ENCODE measurements at regions of chr17 and their contacts with region 1.

Region 1: DNA sequence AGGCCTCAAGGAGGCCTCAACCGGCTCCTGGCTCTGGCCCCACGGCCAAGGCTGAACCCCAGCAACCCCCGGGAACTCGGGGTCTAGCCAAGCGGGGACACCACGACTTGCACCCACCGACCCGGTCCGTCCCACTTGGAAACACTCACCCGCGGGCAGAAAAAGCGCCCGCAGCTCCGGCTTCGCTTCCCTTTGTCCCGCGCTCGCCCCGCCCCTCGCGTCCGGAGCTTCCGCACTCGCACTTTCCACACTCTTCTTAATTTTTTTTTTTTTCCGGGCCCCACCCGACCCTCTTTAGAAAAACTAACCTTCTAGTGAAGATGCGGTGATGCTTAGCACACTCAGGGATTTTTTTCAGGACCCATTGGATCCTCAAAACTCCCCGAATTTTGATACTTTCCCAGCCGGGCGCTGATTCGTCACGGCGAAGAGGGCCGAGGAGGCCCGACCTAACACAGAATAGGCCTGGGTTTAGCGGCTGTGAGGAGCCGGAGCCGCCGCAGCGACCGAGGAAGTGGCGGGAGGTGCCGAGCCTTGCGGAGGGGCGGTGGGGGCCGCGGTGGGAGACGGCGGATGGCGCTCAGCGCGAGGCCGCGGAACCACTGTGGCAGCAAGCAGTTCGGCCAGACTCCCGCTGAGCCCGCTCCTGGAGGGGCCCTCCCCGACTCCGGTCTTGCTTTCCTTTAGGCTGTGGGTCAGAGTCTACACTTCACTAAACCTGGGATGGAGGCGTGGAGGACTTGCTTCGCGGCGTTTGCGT is at the start of gene SMARCE1:
- DNase-seq: peak; percentile 98
- H3K4me3 Mint-ChIP-seq: peak within 1 kb of the TSS; percentile 74
- H3K27ac Mint-ChIP-seq: peak within 1 kb of the TSS; percentile 87
- H3K4me1 Mint-ChIP-seq: peaks cover 29% of the 10 kb centered on the region
- H3K27me3 Mint-ChIP-seq: no peaks in the 10 kb centered on the region
- CTCF ChIP-seq: no peak
- total RNA-seq, gene SMARCE1: 755 and 768 TPM in 2 replicates

Region 2: GRCh38 chr17:40632216-40632615 is 15.6 kb before region 1 on chr17:
- CTCF ChIA-PET with region 1: interaction called, 217 read pairs
- intact Hi-C with region 1: no loop called
- DNase-seq: peak; percentile 4
- H3K4me3 Mint-ChIP-seq: no peak overlapping the region
- H3K27ac Mint-ChIP-seq: no peak overlapping the region
- H3K4me1 Mint-ChIP-seq: no peaks in the 10 kb centered on the region
- H3K27me3 Mint-ChIP-seq: no peaks in the 10 kb centered on the region
- CTCF ChIP-seq: no peak

Region 3: DNA sequence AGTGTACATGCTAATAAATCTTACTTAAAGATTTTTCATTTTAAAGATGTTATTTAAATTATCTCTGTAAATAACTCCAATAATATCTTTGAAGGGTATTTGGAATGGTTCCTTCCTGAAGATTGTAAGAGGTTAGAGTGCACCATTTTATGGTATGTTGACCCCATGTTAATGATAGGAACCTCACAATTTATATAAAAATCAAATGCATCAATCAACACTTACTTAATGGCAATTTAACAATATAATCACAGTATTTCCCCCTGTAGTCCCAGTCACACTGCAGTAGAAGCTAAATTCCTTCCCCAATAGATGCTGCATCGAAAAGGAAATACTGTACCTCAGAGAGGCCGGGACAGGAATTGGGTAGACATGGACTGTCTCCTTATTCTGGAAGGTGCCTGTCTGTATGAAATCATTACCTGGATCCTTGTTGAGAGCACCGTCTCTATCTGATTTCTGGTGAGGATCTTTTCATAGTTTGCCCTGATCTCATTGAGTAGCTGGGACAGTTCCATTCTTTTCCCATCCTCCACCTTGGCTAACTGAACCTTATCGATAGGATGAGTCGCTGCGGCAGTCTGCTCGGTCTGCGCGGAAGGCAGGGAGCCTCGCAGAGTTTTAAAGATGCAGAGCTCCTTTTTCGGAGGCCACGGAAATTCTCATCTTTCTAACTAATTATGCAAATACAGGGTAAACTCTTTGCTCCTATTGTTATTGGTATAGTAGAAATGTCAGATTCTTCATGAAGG is 17.0 kb after region 1 on chr17 and contains the start of gene KRT222:
- CTCF ChIA-PET with region 1: interaction called, 43 read pairs
- intact Hi-C with region 1: loop called (anchors 1 kb)
- DNase-seq: no peak
- H3K4me3 Mint-ChIP-seq: peak within 1 kb of the TSS; percentile 46
- H3K27ac Mint-ChIP-seq: no peak within 1 kb of the TSS
- H3K4me1 Mint-ChIP-seq: peaks cover 19% of the 10 kb centered on the region
- H3K27me3 Mint-ChIP-seq: peaks cover 86% of the 10 kb centered on the region
- CTCF ChIP-seq: no peak
- total RNA-seq, gene KRT222: not detected in 2 replicates

Region 4: DNA sequence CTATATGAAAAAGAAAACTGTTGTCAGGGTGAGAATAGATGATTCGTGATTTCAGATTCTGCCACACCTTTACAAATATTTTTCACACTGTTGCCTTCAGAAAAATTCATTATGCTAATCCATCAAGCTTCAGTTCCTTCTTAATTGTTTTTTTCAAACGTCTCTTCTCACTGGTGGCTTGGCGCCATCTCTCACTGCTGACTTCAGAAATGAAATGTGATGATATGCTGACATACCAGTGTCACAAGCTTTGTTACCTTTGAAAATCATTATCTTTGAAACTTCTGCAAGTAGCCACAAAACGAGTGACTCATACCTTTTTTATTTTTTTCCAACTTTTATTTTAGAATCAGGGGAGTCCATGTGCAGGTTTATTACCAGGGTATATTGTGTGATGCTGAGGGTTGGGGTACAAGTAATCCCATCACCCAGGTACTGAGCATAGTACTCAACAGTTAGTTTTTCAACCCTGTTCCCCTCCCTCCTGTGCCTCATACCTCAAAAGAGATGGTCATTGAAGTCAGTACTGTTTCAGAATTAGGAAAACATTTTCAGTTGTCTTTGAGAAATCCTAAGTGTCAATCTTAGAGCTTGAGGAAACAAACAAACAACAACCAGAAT is 31.2 kb after region 1 on chr17:
- CTCF ChIA-PET with region 1: interaction called, 17 read pairs
- intact Hi-C with region 1: no loop called
- DNase-seq: no peak
- H3K4me3 Mint-ChIP-seq: no peak overlapping the region
- H3K27ac Mint-ChIP-seq: no peak overlapping the region
- H3K4me1 Mint-ChIP-seq: peaks cover 6% of the 10 kb centered on the region
- H3K27me3 Mint-ChIP-seq: peaks cover 85% of the 10 kb centered on the region
- CTCF ChIP-seq: no peak

Region 5: DNA sequence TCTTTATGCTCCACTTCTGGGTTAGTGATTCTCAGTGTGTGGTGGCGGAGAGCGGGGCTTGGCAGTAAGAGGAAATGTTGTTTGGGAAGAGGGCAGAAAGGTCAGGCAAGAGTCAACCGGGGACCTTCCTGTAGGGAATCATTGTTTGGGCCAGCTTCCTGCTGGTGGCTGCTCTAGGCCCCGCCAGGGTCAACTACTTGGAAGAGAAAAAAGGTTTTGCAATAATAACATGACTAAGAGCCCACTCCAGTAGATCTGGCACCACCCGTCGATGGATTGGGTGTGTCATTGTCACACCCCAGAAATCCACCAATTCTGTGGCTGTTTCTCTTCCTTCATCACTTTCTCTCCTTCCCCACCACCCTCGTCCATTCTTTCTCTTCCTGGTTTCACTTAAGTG is 59.9 kb after region 1 on chr17:
- CTCF ChIA-PET with region 1: interaction called, 16 read pairs
- intact Hi-C with region 1: no loop called
- DNase-seq: peak; percentile 92
- H3K4me3 Mint-ChIP-seq: no peak overlapping the region
- H3K27ac Mint-ChIP-seq: peak overlapping the region; percentile 14
- H3K4me1 Mint-ChIP-seq: peaks cover 36% of the 10 kb centered on the region
- H3K27me3 Mint-ChIP-seq: peaks cover 14% of the 10 kb centered on the region
- CTCF ChIP-seq: no peak

Region 6: GRCh38 chr17:40726919-40727318 is 79.1 kb after region 1 on chr17:
- CTCF ChIA-PET with region 1: interaction called, 12 read pairs
- intact Hi-C with region 1: loop called (anchors 1 kb)
- DNase-seq: peak; percentile 45
- H3K4me3 Mint-ChIP-seq: no peak overlapping the region
- H3K27ac Mint-ChIP-seq: no peak overlapping the region
- H3K4me1 Mint-ChIP-seq: peaks cover 19% of the 10 kb centered on the region
- H3K27me3 Mint-ChIP-seq: peaks cover 54% of the 10 kb centered on the region
- CTCF ChIP-seq: no peak

Region 7: GRCh38 chr17:40775945-40776344 is 128.1 kb after region 1 on chr17:
- CTCF ChIA-PET with region 1: interaction called, 11 read pairs
- intact Hi-C with region 1: no loop called
- DNase-seq: no peak
- H3K4me3 Mint-ChIP-seq: no peak overlapping the region
- H3K27ac Mint-ChIP-seq: no peak overlapping the region
- H3K4me1 Mint-ChIP-seq: no peaks in the 10 kb centered on the region
- H3K27me3 Mint-ChIP-seq: peaks cover 83% of the 10 kb centered on the region
- CTCF ChIP-seq: no peak